ENCODE measurements at regions of chr22 and their contacts with region 1.

Region 1: DNA sequence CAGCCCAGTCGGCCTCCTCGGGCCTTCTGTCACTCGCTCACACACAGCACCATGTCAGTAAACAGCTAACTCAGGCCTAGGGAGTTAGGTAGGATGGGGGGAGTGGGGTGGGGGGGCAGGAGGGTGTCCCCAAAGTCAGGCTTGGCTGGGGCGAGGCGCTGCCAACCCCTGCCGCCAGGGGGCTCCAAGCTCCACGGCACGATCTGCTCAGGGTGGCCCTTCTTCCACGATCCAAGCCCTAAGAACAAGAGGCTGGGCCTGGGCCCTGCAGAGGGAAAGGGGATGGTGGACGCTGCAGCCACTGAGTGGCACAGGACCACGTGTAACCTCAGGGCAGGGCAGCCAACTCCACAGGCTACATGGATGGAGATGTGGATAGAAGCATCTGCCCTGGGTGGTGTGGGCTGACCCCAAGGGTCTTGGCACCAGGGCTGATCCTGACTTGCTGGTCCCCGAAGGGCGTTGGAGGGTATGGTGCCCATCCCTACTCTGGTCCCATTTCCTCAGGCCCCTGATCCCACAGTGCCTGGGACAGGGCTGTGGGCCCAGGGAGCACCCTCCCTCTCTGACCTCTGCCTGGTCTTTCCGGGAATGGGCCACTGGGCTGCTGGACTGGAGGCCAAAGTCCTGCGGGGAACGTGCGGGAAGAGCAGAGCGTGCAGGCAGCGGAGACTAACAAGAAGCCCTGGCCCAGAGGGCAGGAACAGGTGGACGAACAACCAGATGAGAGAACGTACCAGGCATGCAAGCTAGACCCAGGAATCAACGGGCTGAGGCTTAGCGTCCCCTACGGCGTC is 29.1 kb upstream of the TXNRD2 start:
- DNase-seq: peak; percentile 73 to 83 (median 82)
- ATAC-seq: peak; percentile 75
- H3K4me3 ChIP-seq: no peak overlapping the region
- H3K4me1 ChIP-seq: no peaks in the 10 kb centered on the region
- CTCF ChIP-seq: peak; percentile 91

Region 2: DNA sequence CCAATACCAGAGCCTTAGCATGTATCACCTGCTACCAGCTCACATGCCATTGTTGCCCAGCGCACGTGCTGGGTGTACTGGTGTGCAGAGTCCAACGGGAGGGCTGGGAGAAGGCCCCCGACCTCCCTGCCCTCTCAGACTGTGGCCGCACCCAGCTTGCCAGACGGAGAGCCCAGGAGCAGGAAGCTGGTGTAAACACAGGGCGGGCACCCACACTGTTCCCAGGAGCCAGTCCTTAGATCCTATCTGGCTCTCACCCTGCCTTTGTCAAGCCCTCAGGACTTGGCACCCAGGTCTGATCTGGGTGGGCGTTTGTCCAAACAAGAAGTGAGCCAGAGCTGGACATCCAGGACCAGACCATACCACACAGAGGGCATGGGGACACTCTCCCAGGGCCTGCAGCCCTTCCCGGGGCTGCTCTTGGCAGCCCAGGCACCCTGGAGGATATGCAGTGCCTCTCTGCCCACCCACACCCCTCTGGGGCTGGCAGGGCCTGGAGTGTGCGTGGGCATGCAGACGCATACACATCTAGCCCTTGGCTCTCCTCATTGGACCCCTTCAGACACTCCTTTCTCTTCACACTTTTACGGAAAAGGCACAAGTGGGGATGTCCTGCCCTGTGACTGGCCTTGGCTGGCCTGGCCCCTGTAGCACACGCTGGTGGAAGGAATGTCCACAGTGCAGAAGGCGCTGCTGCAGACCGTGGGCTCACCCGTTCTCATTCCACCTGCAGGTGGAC is 426.5 kb before region 1 on chr22:
- intact Hi-C with region 1: no loop called
- DNase-seq: peak; percentile 59 to 71 (median 70)
- ATAC-seq: peak; percentile 99
- H3K4me3 ChIP-seq: no peak overlapping the region
- H3K4me1 ChIP-seq: no peaks in the 10 kb centered on the region
- CTCF ChIP-seq: no peak

Region 3: DNA sequence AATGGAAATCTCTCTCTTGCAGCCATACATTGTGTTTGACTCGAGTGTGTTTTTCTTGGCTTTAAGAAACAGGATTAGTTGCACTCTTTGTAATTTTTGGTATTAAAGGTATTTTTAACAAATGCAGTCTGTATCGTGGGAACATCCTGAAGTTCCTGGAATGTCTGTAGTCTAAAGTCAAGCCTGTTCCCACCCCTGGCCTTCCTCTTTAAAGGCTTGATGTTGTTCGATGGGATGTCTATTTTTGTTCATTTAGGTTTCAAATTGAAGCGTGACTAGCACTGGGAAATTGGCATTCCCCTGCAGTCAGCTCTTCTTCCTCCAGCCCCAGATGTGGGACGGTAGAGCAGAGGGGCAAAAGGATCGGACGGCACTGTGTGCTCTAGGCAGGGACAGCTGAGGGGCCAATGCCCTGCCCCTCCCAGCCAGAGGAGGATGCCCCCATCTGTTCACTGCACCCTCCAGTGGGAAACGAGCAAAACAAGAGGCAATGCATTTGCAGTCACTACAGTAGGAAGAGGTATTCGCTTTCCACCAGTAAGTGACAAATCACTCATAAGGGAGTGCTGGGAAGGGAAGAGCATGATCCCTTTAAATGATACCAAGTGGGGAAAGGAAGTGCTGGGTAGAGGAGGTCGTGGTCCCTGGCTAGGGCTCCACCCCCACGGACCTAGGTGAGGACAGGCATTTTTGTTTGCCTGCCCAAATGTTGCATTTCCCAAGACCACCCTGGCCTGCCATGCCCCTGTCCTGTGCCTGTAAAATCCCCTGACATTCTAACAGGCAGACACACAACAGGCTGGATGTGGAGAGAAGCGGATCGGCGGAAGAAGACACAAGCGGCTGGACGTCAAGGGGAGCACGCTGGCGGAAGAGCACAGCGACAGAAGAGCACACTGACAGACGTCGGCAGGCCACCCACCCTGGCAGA is 303.7 kb before region 1 on chr22:
- intact Hi-C with region 1: no loop called
- DNase-seq: no peak
- ATAC-seq: no peak
- H3K4me3 ChIP-seq: no peak overlapping the region
- H3K4me1 ChIP-seq: no peaks in the 10 kb centered on the region
- CTCF ChIP-seq: no peak

Region 4: GRCh38 chr22:19832476-19833108 is 138.1 kb before region 1 on chr22:
- intact Hi-C with region 1: no loop called
- DNase-seq: no peak
- ATAC-seq: no peak
- H3K4me3 ChIP-seq: no peak overlapping the region
- H3K4me1 ChIP-seq: no peaks in the 10 kb centered on the region
- CTCF ChIP-seq: no peak

Region 5: DNA sequence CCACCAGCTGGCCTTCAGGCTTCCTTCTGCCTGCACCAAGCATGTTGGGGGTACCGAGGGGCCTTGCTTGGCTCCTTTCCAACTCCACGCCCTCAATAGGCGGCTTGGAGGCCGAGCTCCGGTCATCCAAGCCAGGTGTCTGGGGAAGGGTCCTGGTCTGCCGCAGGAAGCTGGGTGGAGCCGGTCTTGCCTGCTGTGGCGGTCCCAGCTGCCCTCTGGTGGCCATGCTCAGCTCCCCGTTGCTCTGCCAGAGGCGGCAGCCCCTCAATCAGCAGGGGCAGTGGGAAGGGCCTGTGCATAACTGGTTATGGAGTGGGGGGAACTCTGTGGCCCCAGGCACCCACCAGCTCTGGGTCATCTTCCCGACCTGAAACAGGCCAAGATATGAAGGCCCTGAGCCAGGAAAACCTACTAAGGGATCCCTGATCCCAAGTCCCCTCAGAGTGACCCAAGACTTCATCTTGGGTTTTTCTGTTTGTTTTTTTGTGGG is 42.8 kb after region 1 on chr22:
- intact Hi-C with region 1: loop called (anchors 2 to 5 kb)
- DNase-seq: peak; percentile 50 to 57 (median 55)
- ATAC-seq: no peak
- H3K4me3 ChIP-seq: no peak overlapping the region
- H3K4me1 ChIP-seq: peaks cover 12% of the 10 kb centered on the region
- CTCF ChIP-seq: peak; percentile 13